Esophagus muscularis mucosa (tissue), 4 donors: ENCODE measurements at regions of chr3 and their contacts with region 1.

Region 1: GRCh38 chr3:52339612-52340011 is 23.5 kb downstream of the DNAH1 start:
- DNase-seq: no peak
- H3K4me3 ChIP-seq: no peak overlapping the region
- H3K27ac ChIP-seq: no peak overlapping the region
- H3K4me1 ChIP-seq: no peaks in the 10 kb centered on the region
- H3K27me3 ChIP-seq: no peaks in the 10 kb centered on the region
- CTCF ChIP-seq: peak; percentile 69 to 77 (median 70)
- EP300 ChIP-seq: no peak
- POLR2A ChIP-seq: no peak

Region 2: GRCh38 chr3:52231502-52232293 is 107.9 kb before region 1 on chr3:
- intact Hi-C with region 1: loop called (anchors 2 kb)
- DNase-seq: no peak
- H3K4me3 ChIP-seq: no peak overlapping the region
- H3K27ac ChIP-seq: no peak overlapping the region
- H3K4me1 ChIP-seq: peaks cover 28 to 53% (median 51%) of the 10 kb centered on the region in 4 donors
- H3K27me3 ChIP-seq: no peaks in the 10 kb centered on the region
- CTCF ChIP-seq: peak in 2 of 3 experiments; percentile 80 to 90
- EP300 ChIP-seq: no peak
- POLR2A ChIP-seq: no peak

Region 3: GRCh38 chr3:52291508-52292181 is 48.0 kb before region 1 on chr3:
- intact Hi-C with region 1: loop called (anchors 1 kb)
- DNase-seq: no peak
- H3K4me3 ChIP-seq: no peak overlapping the region
- H3K27ac ChIP-seq: no peak overlapping the region
- H3K4me1 ChIP-seq: peaks cover 14 to 18% (median 16%) of the 10 kb centered on the region in 4 donors
- H3K27me3 ChIP-seq: no peaks in the 10 kb centered on the region
- CTCF ChIP-seq: peak; percentile 20 to 29 (median 25)
- EP300 ChIP-seq: no peak
- POLR2A ChIP-seq: no peak

Region 4: DNA sequence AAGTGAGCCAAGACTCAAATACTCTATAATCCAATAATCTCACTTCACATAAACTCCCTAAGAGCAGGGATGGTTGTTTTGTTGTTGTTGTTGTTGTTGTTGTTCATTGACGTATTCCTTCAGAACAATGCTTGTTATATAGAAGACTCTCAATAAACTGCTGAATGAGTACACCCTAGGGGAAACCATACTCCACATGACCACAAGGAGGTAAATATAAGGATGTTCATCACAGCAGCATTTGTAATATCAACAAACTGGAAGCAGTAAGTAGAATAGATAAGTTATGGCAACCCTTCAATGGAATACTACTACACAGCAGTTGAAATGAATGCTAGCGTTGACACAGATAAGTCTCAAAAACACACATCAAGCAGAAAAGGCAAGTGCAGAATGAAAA is 620.2 kb after region 1 on chr3:
- intact Hi-C with region 1: no loop called
- DNase-seq: no peak
- H3K4me3 ChIP-seq: no peak overlapping the region
- H3K27ac ChIP-seq: no peak overlapping the region
- H3K4me1 ChIP-seq: no peaks in the 10 kb centered on the region
- H3K27me3 ChIP-seq: no peaks in the 10 kb centered on the region
- CTCF ChIP-seq: no peak
- EP300 ChIP-seq: no peak
- POLR2A ChIP-seq: no peak